GM10248 (cell line): ENCODE measurements at regions of chr22 and their contacts with region 1.

Region 1: DNA sequence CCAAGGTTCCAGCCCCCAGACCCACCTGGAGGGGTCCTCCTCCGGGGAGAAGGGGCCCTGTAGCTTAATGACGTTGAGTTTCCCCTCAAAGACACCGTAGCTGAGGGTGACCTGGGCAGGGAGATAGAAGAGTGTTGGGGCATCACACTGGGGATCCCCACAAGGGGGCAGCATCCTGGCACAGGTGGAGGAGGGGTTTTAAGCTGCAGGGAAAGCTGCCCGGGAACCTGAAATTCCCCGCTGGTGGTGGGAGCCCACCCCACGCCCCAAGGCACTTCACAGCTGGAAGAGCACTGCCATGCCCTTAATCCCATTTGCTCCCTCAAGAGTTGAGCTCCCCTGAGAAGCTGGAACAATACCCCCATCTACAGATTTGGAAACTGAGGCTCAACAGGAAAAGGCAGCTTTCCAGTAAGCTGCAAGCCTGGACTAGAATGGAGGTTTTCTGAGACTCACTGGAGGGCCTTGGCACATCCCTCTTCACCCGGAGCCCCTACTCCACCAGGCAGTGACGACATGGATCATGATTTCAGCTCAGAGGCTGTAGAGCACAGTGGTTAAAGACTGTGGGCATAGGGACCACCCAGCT is 13.7 kb downstream of the MFNG start:
- DNase-seq: peak; percentile 55
- CTCF ChIP-seq: peak; percentile 38

Region 2: GRCh38 chr22:37316875-37317371 is 155.6 kb before region 1 on chr22:
- CTCF ChIA-PET with region 1: interaction called, 11 read pairs
- POLR2A ChIA-PET with region 1: no interaction called
- DNase-seq: peak; percentile 92
- CTCF ChIP-seq: peak; percentile 99

Region 3: GRCh38 chr22:37419969-37420685 is 52.4 kb before region 1 on chr22:
- CTCF ChIA-PET with region 1: no interaction called
- POLR2A ChIA-PET with region 1: no interaction called
- DNase-seq: no peak
- CTCF ChIP-seq: no peak

Region 4: GRCh38 chr22:37457093-37457893 is 15.2 kb before region 1 on chr22:
- CTCF ChIA-PET with region 1: interaction called, 14 read pairs
- POLR2A ChIA-PET with region 1: no interaction called
- DNase-seq: peak; percentile 87
- CTCF ChIP-seq: peak; percentile 76

Region 5: DNA sequence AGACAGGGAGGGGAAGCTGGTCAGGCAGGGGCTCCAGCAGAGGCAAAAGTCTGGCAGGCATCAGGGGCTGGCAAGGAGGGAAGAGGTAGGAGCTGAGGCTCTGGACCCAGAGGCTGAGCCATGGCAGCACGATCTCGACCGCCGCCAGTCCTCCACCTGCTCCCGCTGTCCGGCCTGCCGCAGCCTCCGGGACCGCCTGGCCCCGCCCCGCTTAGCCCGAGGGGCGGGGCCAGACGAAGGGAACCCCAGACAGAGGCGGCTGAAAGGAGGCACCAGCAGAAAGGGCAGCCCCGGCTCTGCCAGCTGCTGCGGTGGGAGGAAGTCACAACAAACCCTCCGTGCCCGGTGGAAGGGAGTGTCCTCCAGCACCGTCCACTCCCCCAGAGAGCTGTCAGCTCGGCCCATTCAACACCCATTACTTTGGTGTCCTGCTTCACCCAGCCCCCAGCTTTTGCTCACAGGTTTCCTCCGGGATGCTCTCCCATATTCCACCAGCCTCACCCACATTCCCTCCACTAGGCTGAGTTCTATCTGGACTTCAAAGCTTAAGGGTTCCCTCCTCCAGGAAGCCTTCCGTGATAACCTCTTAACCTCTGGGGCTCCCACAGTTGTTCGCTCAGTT is 13.8 kb after region 1 on chr22 and contains the start of gene MFNG:
- CTCF ChIA-PET with region 1: interaction called, 21 read pairs
- POLR2A ChIA-PET with region 1: no interaction called
- DNase-seq: peak; percentile 94
- CTCF ChIP-seq: no peak

Region 6: GRCh38 chr22:37492428-37493344 is 20.2 kb after region 1 on chr22:
- CTCF ChIA-PET with region 1: interaction called, 21 read pairs
- POLR2A ChIA-PET with region 1: no interaction called
- DNase-seq: peak; percentile 75
- CTCF ChIP-seq: peak; percentile 49

Region 7: DNA sequence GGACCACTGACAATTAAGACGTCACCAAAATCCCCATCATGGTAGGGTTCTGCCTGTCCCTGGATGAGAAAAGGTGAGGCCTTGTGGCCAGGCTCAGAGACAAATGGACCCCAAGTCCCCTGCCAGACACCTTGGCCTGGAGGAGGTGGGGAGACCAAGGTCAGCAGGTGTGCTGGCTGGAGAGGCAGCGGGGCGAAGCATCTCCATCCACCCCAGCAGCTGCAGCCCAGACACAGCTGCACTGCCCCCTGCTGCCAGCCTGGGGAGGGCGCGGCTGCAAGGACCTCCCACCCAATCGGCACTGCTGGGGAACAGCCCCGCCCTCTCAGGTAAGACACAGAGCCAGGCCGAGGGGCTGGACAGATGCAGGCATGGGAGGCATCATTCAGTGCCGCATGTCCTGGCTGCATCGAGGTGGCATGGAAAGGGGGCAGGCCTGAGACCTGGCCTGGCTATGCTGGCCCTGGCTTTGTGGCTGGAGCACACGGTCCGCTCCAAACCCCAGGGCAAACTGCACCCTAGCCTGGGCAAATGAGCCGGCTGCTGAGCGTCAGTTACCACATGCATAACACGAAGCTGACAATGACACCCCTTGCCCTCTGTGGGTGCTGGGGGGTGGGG is 25.9 kb after region 1 on chr22:
- CTCF ChIA-PET with region 1: interaction called, 18 read pairs
- POLR2A ChIA-PET with region 1: no interaction called
- DNase-seq: peak; percentile 86
- CTCF ChIP-seq: peak; percentile 81

Region 8: GRCh38 chr22:37734964-37735451 is 262.5 kb after region 1 on chr22:
- CTCF ChIA-PET with region 1: no interaction called
- POLR2A ChIA-PET with region 1: no interaction called
- DNase-seq: no peak
- CTCF ChIP-seq: no peak

Region 9: GRCh38 chr22:38080850-38081635 is 608.5 kb after region 1 on chr22:
- CTCF ChIA-PET with region 1: no interaction called
- POLR2A ChIA-PET with region 1: no interaction called
- DNase-seq: no peak
- CTCF ChIP-seq: no peak